ENCODE measurements at regions of chr11 and their contacts with region 1.

Region 1: DNA sequence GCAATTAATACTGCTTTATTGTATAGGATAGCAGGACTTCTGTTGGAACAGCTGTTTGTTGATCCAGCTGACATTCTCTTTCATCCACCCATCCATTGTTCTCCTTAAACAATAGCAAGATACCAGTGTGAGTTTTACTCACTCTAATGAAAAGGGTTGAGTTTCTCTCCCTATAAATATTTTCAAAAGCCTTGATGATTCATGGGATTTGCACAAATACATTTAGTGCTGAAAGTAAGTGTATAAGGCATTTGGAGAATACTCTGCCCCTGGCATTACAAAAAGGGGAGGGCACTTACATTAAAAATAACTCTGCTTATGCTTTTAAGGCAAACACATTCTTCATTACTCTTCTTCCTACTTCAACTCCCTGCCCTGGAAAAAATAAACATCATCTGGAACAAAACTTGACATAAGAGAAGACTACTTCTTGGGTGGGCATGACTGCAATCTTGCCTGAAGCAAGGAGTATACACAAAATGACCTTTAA is 634.9 kb downstream of the METTL15 start:
- DNase-seq: no peak
- ATAC-seq: no peak
- H3K4me3 ChIP-seq: no peak overlapping the region
- H3K27ac ChIP-seq: no peak overlapping the region
- H3K4me1 ChIP-seq: no peaks in the 10 kb centered on the region
- H3K27me3 ChIP-seq: no peaks in the 10 kb centered on the region
- CTCF ChIP-seq: no peak
- POLR2A ChIP-seq: no peak

Region 2: GRCh38 chr11:28537822-28538221 is 205.3 kb before region 1 on chr11:
- in situ Hi-C with region 1: no loop called
- intact Hi-C with region 1: no loop called
- DNase-seq: no peak
- ATAC-seq: no peak
- H3K4me3 ChIP-seq: no peak overlapping the region
- H3K27ac ChIP-seq: no peak overlapping the region
- H3K4me1 ChIP-seq: no peaks in the 10 kb centered on the region
- H3K27me3 ChIP-seq: no peaks in the 10 kb centered on the region
- CTCF ChIP-seq: no peak
- POLR2A ChIP-seq: no peak

Region 3: GRCh38 chr11:28649922-28650321 is 93.2 kb before region 1 on chr11:
- in situ Hi-C with region 1: no loop called
- intact Hi-C with region 1: no loop called
- DNase-seq: no peak
- ATAC-seq: no peak
- H3K4me3 ChIP-seq: no peak overlapping the region
- H3K27ac ChIP-seq: no peak overlapping the region
- H3K4me1 ChIP-seq: no peaks in the 10 kb centered on the region
- H3K27me3 ChIP-seq: no peaks in the 10 kb centered on the region
- CTCF ChIP-seq: no peak
- POLR2A ChIP-seq: no peak

Region 4: DNA sequence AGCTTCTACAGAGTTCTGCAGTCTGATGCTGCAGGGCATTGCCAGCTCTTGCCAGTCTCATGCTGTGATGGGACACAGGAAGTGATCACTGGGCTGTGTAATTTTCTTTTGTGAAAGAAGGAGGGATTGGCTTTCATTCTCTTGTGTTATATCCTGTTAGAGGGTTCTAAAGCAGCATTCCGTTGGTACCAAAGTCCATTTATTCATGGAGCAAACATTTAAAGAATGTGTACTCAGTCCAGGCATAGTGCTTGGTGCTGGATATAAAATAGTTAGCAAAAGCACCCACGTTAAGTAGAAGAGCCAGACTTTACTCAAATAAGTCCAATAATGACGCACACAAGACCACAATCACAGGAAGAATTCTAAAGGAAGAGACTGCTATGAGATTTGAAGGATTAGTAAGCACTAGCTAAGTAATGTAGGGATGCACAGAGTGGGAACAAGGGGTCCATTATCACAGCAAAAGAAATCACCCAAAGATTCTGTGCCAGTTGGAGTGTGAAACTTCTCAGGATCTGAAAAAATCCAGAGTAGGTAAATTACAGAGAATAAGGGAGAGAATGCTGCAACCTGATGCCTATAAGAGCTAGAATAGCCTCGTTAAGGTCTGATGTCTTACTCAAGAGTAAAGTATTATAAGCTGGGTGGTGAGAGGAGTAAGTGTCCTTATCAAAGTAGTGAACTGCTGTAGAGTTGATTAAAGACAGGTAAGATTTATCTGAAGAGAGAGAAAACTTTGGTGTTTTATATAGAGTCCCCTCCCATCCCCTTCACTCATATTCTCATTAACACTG is 93.4 kb after region 1 on chr11:
- in situ Hi-C with region 1: loop called in 1 of 4 experiments (anchors 25 kb)
- intact Hi-C with region 1: no loop called
- DNase-seq: no peak
- ATAC-seq: no peak
- H3K4me3 ChIP-seq: no peak overlapping the region
- H3K27ac ChIP-seq: no peak overlapping the region
- H3K4me1 ChIP-seq: no peaks in the 10 kb centered on the region
- H3K27me3 ChIP-seq: no peaks in the 10 kb centered on the region
- CTCF ChIP-seq: no peak
- POLR2A ChIP-seq: no peak